PC-9 (cell line): ENCODE measurements at regions of chr7 and their contacts with region 1.

Region 1: DNA sequence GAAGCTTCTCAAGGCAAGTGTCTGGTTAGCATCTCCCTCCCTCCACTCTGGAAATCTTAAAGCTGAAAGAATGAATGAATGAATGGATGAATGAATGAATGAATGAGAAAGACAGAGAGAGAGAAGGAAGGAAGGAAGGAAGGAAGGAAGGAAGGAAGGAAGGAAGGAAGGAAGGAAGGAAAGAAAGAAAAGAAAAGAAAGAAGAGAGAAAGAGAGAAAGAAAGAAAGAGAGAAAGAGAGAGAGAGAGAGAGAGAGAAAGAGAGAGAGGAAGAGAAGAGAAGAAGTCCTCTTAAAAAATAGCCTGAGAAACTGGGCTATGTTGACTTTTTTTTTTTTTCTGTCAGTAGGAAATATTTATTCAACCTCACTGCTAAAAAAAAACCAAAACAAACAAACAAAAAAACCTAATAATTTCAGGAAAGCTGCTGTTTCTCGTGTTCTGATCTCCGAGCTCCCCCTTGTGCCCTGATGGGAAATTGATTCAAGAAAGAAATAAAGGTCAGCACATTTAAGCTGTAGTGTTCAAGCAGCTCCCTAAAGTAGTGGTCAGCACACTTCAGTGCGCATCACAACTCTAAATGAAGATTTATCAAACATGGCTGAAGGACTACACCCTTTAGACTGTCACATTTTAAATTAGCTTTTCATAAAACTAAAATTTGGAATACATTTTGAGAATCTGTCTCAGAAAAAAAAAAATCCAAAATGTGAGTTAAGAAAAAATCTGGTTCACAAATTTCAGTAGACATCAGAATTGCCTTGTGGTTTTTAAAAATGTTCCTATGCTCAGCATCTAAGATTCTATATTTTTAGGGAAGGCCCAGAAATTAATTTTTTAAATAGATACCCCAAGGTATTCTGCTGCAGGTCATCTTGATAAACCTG is 154.3 kb downstream of the ELAPOR2 start:
- DNase-seq: peak; percentile 24 to 39
- H3K4me3 ChIP-seq: no peak overlapping the region
- H3K27ac ChIP-seq: no peak overlapping the region
- H3K4me1 ChIP-seq: no peaks in the 10 kb centered on the region
- H3K27me3 ChIP-seq: no peaks in the 10 kb centered on the region
- CTCF ChIP-seq: peak; percentile 80

Region 2: DNA sequence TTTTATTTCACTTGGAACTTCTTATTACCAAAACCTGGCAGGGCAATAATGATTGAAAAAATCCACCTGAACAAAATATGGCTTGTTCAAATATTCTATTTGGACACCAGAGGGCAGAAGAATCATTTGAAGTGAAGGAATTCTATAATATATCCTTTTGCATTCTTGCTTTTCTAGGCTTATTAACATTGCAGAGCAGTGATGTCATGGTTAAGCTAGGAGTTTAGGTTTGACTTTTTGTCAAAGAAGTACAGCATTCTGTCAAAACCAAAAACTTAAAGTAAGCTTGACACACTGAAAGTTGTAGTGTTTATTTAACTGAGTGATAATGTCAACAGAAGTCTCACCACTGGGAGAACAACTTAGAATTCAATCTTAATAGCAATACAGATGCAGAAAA is 1874.3 kb before region 1 on chr7:
- CTCF ChIA-PET with region 1: no interaction called
- POLR2A ChIA-PET with region 1: no interaction called
- intact Hi-C with region 1: loop called (anchors 10 kb)
- DNase-seq: no peak
- H3K4me3 ChIP-seq: no peak overlapping the region
- H3K27ac ChIP-seq: no peak overlapping the region
- H3K4me1 ChIP-seq: no peaks in the 10 kb centered on the region
- H3K27me3 ChIP-seq: no peaks in the 10 kb centered on the region
- CTCF ChIP-seq: peak; percentile 81

Region 3: DNA sequence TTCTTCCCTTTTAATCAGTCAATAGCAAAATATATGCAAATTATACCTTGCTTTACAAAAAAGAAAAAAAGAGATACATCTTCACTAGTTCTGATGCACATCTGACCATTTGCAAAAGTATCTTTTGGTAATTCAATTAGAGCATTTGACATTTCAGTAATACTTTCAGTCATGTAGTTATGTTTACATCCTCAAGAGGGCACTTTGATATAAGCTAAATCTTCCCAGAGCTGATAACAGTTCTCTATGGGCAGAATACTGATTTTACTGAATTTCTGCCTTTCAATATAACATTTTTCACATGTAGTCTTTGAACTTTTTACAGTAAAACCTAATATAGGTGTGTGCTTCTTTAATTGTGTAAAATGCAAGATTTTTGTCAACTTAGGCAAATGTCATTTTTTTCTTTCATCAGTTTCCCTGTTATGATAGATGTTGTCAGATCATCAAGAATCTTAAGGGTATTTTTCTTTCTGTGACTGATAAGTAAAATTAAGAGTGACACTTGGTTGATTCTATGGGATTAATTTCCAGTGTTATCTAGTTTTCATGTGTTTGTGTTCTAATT is 1014.9 kb before region 1 on chr7:
- CTCF ChIA-PET with region 1: interaction called, 4 read pairs
- POLR2A ChIA-PET with region 1: no interaction called
- intact Hi-C with region 1: loop called (anchors 1 kb)
- DNase-seq: no peak
- H3K4me3 ChIP-seq: no peak overlapping the region
- H3K27ac ChIP-seq: no peak overlapping the region
- H3K4me1 ChIP-seq: no peaks in the 10 kb centered on the region
- H3K27me3 ChIP-seq: no peaks in the 10 kb centered on the region
- CTCF ChIP-seq: peak; percentile 80

Region 4: GRCh38 chr7:86469680-86470295 is 435.4 kb before region 1 on chr7:
- CTCF ChIA-PET with region 1: no interaction called
- POLR2A ChIA-PET with region 1: no interaction called
- intact Hi-C with region 1: loop called (anchors 2 kb)
- DNase-seq: peak; percentile 45 to 56
- H3K4me3 ChIP-seq: no peak overlapping the region
- H3K27ac ChIP-seq: no peak overlapping the region
- H3K4me1 ChIP-seq: no peaks in the 10 kb centered on the region
- H3K27me3 ChIP-seq: no peaks in the 10 kb centered on the region
- CTCF ChIP-seq: peak; percentile 86

Region 5: DNA sequence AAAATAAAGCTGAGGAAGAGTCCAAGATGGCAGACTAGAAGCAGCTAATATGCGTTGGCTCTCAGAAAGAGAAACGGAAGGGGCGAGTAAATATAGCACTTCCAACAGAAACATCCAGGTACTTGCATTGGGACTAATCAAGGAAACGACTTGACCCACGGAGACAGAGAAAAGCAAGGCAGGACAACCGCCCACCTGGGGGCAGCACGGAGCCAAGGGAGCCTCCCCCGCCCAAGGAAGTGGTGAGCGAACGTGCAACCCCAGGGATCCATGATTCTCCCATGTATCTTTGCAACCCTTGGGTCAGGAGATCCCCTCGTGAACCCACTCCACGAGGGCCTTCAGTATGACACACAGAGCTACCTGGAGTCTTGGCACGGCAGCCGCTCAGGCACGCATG is 306.9 kb before region 1 on chr7:
- CTCF ChIA-PET with region 1: no interaction called
- POLR2A ChIA-PET with region 1: no interaction called
- intact Hi-C with region 1: loop called (anchors 1 kb)
- DNase-seq: peak in 1 of 2 experiments; percentile 37
- H3K4me3 ChIP-seq: no peak overlapping the region
- H3K27ac ChIP-seq: no peak overlapping the region
- H3K4me1 ChIP-seq: no peaks in the 10 kb centered on the region
- H3K27me3 ChIP-seq: no peaks in the 10 kb centered on the region
- CTCF ChIP-seq: no peak

Region 6: DNA sequence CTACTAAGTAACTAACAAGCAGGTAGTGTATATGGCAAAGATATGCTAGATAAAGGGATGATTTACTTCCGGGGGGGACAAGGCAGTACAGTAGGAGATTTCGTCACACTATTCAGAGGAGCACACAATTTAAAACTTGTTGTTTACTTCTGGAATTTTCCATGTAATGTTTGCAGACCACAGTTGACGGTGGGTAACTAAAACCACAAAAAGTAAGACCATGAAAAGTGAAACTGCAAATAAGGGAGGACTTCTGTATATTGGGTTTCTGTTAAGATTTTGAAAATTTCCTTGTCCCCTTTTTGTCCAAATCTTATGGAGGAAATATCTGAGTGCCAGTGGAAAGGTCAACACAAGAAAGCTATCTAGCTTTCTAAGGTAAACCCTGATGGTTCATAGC is 15.7 kb before region 1 on chr7:
- CTCF ChIA-PET with region 1: interaction called, 11 read pairs
- POLR2A ChIA-PET with region 1: no interaction called
- intact Hi-C with region 1: no loop called
- DNase-seq: no peak
- H3K4me3 ChIP-seq: no peak overlapping the region
- H3K27ac ChIP-seq: no peak overlapping the region
- H3K4me1 ChIP-seq: no peaks in the 10 kb centered on the region
- H3K27me3 ChIP-seq: no peaks in the 10 kb centered on the region
- CTCF ChIP-seq: no peak

Region 7: GRCh38 chr7:87027900-87028299 is 122.7 kb after region 1 on chr7:
- CTCF ChIA-PET with region 1: no interaction called
- POLR2A ChIA-PET with region 1: no interaction called
- intact Hi-C with region 1: no loop called
- DNase-seq: no peak
- H3K4me3 ChIP-seq: no peak overlapping the region
- H3K27ac ChIP-seq: no peak overlapping the region
- H3K4me1 ChIP-seq: no peaks in the 10 kb centered on the region
- H3K27me3 ChIP-seq: no peaks in the 10 kb centered on the region
- CTCF ChIP-seq: no peak